ENCODE measurements at regions of chr20 and their contacts with region 1.

Region 1: DNA sequence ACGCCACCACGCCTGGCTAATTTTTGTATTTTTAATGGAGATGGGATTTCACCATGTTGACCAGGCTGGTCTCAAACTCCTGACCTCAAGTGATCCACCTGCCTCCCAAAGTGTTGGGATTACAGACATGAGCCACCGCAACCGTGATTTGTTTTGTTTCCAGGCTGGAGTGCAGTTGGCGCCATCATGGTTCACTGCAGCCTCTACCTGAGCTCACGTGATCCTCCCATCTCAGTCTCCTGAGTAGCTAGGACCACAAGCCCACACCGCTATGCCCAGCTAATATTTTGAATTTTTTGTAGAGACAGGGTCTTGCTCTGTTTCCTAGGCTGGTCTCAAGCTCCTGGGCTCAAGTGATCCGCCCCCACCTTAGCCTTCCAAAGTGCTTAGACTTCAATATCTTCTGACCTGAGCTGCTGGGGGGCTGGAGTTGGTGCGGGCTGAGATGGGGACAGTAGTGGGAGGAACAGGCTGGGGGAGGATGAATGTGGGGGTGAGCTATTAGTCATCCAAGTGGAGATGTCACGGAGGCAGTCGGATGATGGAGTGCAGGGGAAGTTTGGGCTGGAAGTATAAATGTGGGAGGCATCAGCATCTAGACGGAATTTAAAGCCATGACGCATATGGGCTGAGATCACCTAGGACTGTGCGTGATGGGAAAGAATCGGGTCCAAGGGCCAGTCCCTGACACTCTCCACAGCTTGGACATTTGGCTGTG is 23.1 kb upstream of the ZMYND8 start:
- DNase-seq: no peak
- ATAC-seq: no peak
- H3K4me3 Mint-ChIP-seq: no peak overlapping the region
- H3K27ac Mint-ChIP-seq: peak overlapping the region; percentile 18
- H3K4me1 Mint-ChIP-seq: peaks cover 27% of the 10 kb centered on the region
- H3K27me3 Mint-ChIP-seq: no peaks in the 10 kb centered on the region
- CTCF ChIP-seq: no peak

Region 2: DNA sequence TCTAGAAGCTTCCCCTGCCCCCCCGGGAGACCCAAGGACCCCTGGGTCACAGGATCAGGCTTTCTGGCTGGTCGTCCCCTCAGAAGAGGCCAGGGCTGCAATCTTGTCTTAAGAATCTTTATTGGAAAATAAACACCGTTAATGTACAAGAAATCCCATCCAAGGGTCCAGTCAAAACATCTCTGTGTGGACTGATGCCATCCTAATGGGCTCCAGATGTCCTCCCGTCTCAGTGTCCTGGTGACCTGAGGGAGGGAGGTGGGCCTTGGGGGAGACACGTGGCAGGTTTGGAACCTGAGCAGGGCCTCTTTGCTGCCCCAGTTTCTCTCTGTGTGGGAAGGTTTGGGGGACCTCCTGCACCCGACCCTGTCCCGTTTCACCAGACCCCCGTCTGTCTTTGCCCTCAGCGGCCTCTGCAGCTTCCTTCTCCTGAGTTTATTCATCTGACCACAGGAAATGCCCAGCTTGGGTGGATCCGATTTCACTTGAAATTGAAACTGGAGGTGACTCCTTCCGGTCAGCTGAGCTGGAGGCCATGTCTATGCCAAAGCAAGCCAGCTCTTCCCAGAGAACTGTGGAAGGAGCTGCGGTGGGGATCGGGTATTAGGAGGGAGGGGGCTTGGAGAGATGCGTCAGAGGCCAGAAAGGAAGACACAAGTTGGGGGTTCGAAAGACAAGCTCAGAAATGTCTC is 595.0 kb before region 1 on chr20:
- CTCF ChIA-PET with region 1: no interaction called
- POLR2A ChIA-PET with region 1: no interaction called
- intact Hi-C with region 1: no loop called
- DNase-seq: no peak
- ATAC-seq: no peak
- H3K4me3 Mint-ChIP-seq: no peak overlapping the region
- H3K27ac Mint-ChIP-seq: no peak overlapping the region
- H3K4me1 Mint-ChIP-seq: no peaks in the 10 kb centered on the region
- H3K27me3 Mint-ChIP-seq: peaks cover 10% of the 10 kb centered on the region
- CTCF ChIP-seq: no peak

Region 3: GRCh38 chr20:47213966-47214365 is 165.6 kb before region 1 on chr20:
- CTCF ChIA-PET with region 1: interaction called, 79 read pairs
- POLR2A ChIA-PET with region 1: no interaction called
- intact Hi-C with region 1: no loop called
- DNase-seq: no peak
- ATAC-seq: no peak
- H3K4me3 Mint-ChIP-seq: no peak overlapping the region
- H3K27ac Mint-ChIP-seq: no peak overlapping the region
- H3K4me1 Mint-ChIP-seq: no peaks in the 10 kb centered on the region
- H3K27me3 Mint-ChIP-seq: no peaks in the 10 kb centered on the region
- CTCF ChIP-seq: no peak

Region 4: GRCh38 chr20:47272893-47273590 is 106.5 kb before region 1 on chr20:
- CTCF ChIA-PET with region 1: interaction called, 620 read pairs
- POLR2A ChIA-PET with region 1: interaction called, 51 read pairs
- intact Hi-C with region 1: loop called (anchors 1 kb)
- DNase-seq: peak; percentile 66
- ATAC-seq: peak; percentile 79
- H3K4me3 Mint-ChIP-seq: no peak overlapping the region
- H3K27ac Mint-ChIP-seq: peak overlapping the region; percentile 92
- H3K4me1 Mint-ChIP-seq: peaks cover 47% of the 10 kb centered on the region
- H3K27me3 Mint-ChIP-seq: no peaks in the 10 kb centered on the region
- CTCF ChIP-seq: peak; percentile 97

Region 5: DNA sequence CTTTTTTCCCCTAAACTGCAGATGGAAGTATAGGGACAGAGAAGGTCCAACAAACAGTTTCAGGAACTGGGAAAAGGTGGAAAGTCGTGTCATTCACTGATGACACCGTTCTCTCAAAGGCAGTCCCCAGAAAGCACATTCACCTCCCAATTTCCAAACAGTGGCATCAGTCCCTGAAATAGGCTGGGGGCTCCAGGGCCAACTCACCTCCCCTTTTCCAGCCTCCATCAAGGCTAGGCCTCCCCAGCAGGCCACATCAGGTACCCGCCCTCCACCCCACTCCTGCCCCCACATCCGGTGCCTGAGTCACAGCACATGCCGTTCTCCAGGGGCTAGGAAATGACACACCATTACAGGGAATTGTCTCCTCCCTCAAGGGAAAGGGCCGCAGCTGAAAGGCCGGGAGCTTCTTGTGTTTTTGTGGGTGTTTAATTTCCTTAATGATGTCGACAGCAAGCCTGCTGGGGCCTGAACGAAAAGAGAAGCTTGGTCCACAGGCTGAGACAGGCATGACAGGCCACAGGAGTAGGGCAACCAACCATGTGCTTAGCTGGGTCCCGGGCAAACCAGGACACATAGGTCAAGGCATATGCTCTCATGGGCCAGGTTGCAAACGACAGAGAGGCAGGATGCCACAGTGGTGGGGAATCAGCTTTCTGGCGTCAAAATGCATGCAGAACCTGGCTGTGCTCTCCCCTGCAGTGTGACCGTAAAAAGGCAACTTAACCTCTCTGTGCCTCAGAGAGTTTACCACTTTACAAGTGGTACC is 62.3 kb before region 1 on chr20:
- CTCF ChIA-PET with region 1: interaction called, 10 read pairs
- POLR2A ChIA-PET with region 1: interaction called, 4 read pairs
- intact Hi-C with region 1: no loop called
- DNase-seq: peak; percentile 75
- ATAC-seq: peak; percentile 72
- H3K4me3 Mint-ChIP-seq: peak overlapping the region; percentile 57
- H3K27ac Mint-ChIP-seq: peak overlapping the region; percentile 94
- H3K4me1 Mint-ChIP-seq: peaks cover 66% of the 10 kb centered on the region
- H3K27me3 Mint-ChIP-seq: no peaks in the 10 kb centered on the region
- CTCF ChIP-seq: no peak

Region 6: DNA sequence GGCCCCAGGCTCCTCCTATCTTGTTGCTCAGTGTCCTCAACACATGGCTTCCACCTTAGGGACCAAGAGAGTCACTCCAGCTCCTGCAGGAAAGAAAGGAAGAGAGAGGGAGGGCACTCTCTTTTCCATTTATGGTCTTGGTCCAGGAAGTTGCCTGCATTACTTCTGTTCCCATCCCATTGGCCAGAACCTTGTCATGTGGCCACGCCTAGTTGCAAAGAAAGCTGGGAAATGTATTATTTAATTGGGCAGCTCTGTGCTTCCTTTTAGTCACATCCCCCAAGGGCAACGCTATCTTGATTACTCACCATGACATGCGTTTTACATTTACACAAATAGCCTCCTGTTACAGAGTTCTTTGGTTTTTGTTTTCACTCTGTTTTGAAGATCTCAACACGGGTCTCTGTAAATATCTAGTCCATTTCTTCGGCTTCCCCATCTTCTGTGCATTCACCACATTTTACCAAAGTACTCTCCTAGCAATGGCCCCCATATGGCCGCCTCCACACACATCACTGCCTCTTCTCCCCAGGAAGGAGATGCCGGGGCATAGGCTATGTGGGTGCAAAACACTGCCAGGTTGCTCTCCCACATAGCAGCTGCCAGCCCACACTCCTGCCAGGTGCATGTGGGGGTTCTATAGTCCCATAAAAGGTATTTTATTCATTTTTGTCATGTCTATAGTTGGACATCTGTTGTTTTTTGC is 12.6 kb after region 1 on chr20:
- CTCF ChIA-PET with region 1: interaction called, 60 read pairs
- POLR2A ChIA-PET with region 1: no interaction called
- intact Hi-C with region 1: no loop called
- DNase-seq: peak; percentile 38
- ATAC-seq: peak; percentile 88
- H3K4me3 Mint-ChIP-seq: no peak overlapping the region
- H3K27ac Mint-ChIP-seq: peak overlapping the region; percentile 65
- H3K4me1 Mint-ChIP-seq: peaks cover 17% of the 10 kb centered on the region
- H3K27me3 Mint-ChIP-seq: no peaks in the 10 kb centered on the region
- CTCF ChIP-seq: no peak

Region 7: GRCh38 chr20:47508278-47508677 is 128.7 kb after region 1 on chr20:
- CTCF ChIA-PET with region 1: interaction called, 44 read pairs
- POLR2A ChIA-PET with region 1: no interaction called
- intact Hi-C with region 1: no loop called
- DNase-seq: no peak
- ATAC-seq: no peak
- H3K4me3 Mint-ChIP-seq: peak overlapping the region; percentile 71
- H3K27ac Mint-ChIP-seq: peak overlapping the region; percentile 98
- H3K4me1 Mint-ChIP-seq: peaks cover 67% of the 10 kb centered on the region
- H3K27me3 Mint-ChIP-seq: no peaks in the 10 kb centered on the region
- CTCF ChIP-seq: no peak